ENCODE measurements at regions of chr11 and their contacts with region 1.

Region 1: DNA sequence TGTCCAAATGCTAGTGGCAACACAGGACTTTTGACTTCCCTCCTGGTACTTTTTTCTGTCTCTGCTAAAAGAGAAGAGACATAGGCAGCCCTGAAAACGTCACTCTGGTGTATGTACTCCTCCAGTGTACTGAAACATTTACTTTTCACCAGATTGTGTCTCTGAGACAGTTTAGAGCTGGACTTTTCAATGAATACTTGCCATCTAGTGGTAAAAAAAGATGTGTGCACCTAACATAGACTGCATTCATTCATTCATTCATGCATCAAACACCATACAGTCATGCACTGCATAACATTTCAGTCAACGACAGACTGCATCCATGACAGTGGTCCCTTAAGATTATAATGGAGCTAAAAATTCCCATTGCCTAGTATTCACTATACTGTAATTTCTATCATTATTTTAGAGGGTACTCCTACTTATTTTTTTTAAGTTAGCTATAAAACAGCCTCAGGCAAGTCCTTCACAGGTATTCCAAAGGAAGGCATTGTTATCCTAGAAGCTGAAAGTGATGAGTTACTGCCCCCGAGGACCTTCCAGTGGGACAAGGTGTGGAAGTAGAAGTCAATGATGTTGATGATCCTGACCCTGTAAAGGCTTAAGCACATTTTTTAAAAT is 186.2 kb downstream of the SPON1 start:
- DNase-seq: peak in 1 of 2 donors; percentile 66
- ATAC-seq: peak in 2 of 3 donors; percentile 57
- H3K4me3 ChIP-seq: no peak overlapping the region
- H3K4me3 Mint-ChIP-seq: no peak overlapping the region
- H3K27ac ChIP-seq: no peak overlapping the region
- H3K27ac Mint-ChIP-seq: no peak overlapping the region
- H3K4me1 ChIP-seq: no peaks in the 10 kb centered on the region
- H3K4me1 Mint-ChIP-seq: no peaks in the 10 kb centered on the region
- H3K27me3 ChIP-seq: no peaks in the 10 kb centered on the region
- H3K27me3 Mint-ChIP-seq: peaks cover 8 to 23% of the 10 kb centered on the region in 2 donors
- CTCF ChIP-seq: peak; percentile 43

Region 2: DNA sequence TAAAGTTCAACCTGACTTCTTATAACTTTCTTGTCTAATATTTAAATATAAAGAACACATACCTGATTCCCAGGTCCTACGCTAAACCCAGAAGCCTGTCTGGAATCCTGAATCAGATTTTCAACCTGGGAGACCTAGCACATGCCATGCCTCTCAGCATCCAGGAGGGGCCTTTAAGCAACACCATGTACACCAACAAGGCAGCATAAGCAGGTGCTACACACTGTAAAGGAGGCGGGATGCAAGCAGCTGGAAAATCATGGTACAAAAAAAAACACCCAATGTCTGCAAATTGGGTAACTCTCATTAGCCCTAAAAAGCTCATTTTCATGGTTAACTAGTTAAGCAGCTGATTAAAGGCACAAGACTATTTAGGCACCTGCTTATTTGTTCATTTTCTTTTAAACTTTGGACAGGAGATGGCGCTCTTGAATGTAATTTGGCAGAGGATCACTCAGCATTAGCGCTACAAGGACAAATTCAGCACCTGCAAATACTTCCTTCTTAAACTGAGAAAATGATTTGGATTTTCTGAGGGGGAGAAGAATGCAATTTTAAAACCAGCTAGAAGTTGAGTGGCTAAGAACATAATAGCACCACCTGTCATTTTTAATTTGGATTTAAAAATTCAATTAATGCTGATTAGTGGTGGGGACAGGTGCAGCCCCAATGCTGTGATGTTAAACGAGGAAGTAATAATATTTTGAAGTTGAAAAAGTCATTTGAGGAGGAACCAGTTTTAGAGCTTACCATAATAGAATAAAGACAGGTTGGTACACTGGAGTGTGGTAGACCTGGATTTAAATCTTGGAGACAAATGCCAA is 376.3 kb before region 1 on chr11:
- intact Hi-C with region 1: loop called (anchors 1 kb)
- DNase-seq: peak in 1 of 2 donors; percentile 88
- ATAC-seq: peak; percentile 53 to 74 (median 63)
- H3K4me3 ChIP-seq: no peak overlapping the region
- H3K4me3 Mint-ChIP-seq: no peak overlapping the region
- H3K27ac ChIP-seq: no peak overlapping the region
- H3K27ac Mint-ChIP-seq: no peak overlapping the region
- H3K4me1 ChIP-seq: no peaks in the 10 kb centered on the region
- H3K4me1 Mint-ChIP-seq: no peaks in the 10 kb centered on the region
- H3K27me3 ChIP-seq: no peaks in the 10 kb centered on the region
- H3K27me3 Mint-ChIP-seq: peaks cover 13 to 25% of the 10 kb centered on the region in 2 donors
- CTCF ChIP-seq: peak; percentile 68